OCI-LY7 (cell line): ENCODE measurements at regions of chr11 and their contacts with region 1.

Region 1: DNA sequence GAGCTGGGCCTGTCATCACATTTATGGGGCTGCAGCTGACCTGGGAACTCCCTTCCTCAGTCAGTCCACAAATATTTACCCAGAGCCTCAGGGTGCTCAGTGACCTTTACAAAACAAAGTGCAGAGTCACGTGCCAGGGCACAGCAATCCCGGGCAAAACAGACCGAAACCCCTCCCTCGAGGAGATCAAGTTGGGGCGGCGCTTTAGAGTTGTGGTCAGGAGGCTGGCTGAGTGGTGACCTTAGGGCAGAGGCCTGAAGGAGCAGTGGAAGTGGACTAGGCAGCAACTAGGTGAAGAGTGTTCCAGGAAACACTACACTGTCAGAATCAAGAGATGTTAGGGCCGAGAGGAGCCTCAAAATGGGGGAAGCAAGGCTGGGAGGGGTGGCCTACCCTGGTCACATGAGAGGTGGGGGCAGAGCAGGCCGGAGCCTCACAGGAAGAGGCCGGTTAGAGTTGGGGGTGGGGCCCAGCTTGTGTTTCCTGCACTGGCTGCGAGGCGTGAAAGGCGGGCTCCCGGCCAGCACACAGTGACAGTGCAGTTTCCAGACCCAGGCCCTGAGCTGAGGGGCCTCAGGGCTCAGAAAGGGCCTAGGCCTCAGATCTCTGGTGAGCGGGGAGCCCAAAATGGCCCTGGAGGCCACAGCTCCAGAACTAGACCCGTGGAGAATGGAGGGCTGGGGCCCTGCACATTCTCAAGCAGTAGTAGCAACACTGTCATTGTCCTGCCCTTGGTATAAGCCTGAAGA is 3.7 kb upstream of the NEAT1 start:
- DNase-seq: peak; percentile 98
- H3K4me3 ChIP-seq: peak overlapping the region; percentile 73
- H3K27ac ChIP-seq: peak overlapping the region; percentile 97
- H3K4me1 ChIP-seq: peaks cover 70% of the 10 kb centered on the region
- CTCF ChIP-seq: no peak

Region 2: DNA sequence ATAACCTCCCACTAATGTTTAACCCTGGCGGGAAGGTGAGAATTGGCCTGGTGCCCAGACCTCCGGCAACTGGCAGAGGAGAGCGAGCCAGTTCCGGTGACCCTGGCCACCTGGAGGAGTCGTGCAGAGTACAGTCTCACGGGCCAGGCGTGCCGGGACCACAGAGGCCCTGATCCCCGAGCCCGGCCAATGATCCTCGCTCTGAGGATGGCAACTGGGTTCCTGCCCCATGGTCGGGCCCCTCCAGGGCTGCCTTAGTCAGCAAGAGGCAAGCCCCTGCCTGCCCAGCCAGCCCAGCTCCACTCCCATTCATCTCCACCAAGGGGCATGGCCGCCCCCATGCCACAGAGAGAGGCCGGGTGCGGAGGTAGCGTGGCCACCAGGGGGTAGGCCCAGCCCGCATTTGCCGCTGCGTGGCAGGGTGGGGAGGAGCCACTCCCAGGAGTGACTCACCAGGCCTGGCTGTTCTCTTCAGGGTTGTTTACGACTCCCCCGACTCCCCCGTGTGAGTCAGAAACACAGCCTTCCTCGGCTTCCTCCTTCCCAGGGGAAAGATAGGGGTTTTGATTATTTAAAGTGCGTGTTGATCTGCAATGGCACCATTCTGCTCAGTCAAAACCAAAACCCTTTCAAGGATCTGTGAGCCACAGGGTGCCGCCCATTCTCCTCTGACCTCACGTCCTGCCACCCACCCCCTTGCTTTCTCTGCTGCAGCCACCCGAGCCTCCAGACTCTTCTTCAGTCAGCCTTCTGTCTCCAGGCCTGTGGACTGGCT is 36.7 kb before region 1 on chr11 and contains the start of gene SLC25A45:
- CTCF ChIA-PET with region 1: interaction called, 3 read pairs
- POLR2A ChIA-PET with region 1: interaction called, 3 read pairs
- intact Hi-C with region 1: loop called (anchors 1 kb)
- DNase-seq: peak; percentile 86
- H3K4me3 ChIP-seq: peak within 1 kb of the TSS; percentile 68
- H3K27ac ChIP-seq: peak within 1 kb of the TSS; percentile 52
- H3K4me1 ChIP-seq: peaks cover 51% of the 10 kb centered on the region
- CTCF ChIP-seq: peak; percentile 84
- total RNA-seq, gene SLC25A45: 5.9 and 7.0 TPM in 2 replicates

Region 3: GRCh38 chr11:65440831-65441499 is 22.1 kb after region 1 on chr11:
- CTCF ChIA-PET with region 1: interaction called, 3 read pairs
- POLR2A ChIA-PET with region 1: interaction called, 10 read pairs
- intact Hi-C with region 1: loop called (anchors 1 kb)
- DNase-seq: peak; percentile 91
- H3K4me3 ChIP-seq: peak overlapping the region; percentile 53
- H3K27ac ChIP-seq: peak overlapping the region; percentile 93
- H3K4me1 ChIP-seq: peaks cover 85% of the 10 kb centered on the region
- CTCF ChIP-seq: no peak

Region 4: DNA sequence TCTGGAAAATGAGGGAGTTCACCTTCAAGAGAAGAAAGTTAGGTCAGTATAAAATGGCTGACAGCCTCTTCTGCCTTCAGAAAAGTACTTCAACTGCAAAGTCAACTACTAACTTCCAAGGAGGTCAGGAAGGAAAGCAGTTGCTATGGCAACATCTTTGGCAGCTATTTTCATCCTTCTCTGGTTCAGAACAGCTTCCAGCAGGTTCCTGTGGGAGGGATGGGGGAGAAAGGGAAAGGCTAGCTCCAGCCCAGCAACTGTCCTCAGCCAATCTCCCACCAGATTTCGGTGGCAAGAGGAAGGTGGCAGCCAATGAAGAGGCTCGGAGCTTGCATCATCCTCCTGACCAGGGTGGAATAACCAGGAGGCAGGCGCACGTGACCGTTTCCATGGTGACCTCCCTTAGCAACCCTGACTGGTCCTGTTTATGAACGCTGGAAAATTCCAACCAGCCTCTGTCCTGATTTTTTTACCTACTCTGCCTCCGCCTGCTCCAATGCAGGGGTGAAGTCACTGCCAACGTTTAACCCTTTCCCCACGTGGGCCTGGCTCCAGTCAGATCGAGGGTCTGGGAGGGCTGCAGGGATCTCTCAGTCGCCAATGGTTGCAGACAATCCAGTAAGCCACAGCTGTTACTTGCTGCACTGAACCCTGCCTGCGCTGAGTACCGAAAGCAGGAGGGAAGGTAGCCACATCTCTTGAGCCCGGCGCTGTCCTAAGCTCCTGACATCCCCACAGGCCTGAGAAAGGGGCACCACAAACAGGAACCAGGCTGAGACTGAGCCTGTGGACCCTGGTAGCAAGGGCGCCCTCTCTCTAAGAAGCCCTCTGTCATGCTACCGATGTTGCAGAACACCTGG is 68.8 kb after region 1 on chr11:
- CTCF ChIA-PET with region 1: interaction called, 9 read pairs
- POLR2A ChIA-PET with region 1: interaction called, 34 read pairs
- intact Hi-C with region 1: no loop called
- DNase-seq: peak; percentile 80
- H3K4me3 ChIP-seq: peak overlapping the region; percentile 37
- H3K27ac ChIP-seq: peak overlapping the region; percentile 65
- H3K4me1 ChIP-seq: peaks cover 62% of the 10 kb centered on the region
- CTCF ChIP-seq: peak; percentile 71

Region 5: GRCh38 chr11:65506770-65507505 is 88.1 kb after region 1 on chr11:
- CTCF ChIA-PET with region 1: interaction called, 3 read pairs
- POLR2A ChIA-PET with region 1: interaction called, 237 read pairs
- intact Hi-C with region 1: loop called (anchors 1 kb)
- DNase-seq: peak; percentile 71
- H3K4me3 ChIP-seq: peak overlapping the region; percentile 79
- H3K27ac ChIP-seq: peak overlapping the region; percentile 98
- H3K4me1 ChIP-seq: peaks cover 65% of the 10 kb centered on the region
- CTCF ChIP-seq: no peak